Esophagus muscularis mucosa (tissue), 4 donors: ENCODE measurements at regions of chr4 and their contacts with region 1.

Region 1: GRCh38 chr4:139177868-139178611 is 1.0 kb upstream of the ELF2 start:
- DNase-seq: peak; percentile 98
- H3K4me3 ChIP-seq: peak overlapping the region; percentile 98 to 99 (median 99)
- H3K27ac ChIP-seq: peak overlapping the region; percentile 100
- H3K4me1 ChIP-seq: peaks cover 13 to 35% (median 31%) of the 10 kb centered on the region in 4 donors
- H3K27me3 ChIP-seq: no peaks in the 10 kb centered on the region
- CTCF ChIP-seq: no peak
- EP300 ChIP-seq: peak; percentile 65
- POLR2A ChIP-seq: peak; percentile 86

Region 2: GRCh38 chr4:139030614-139031235 is 147.3 kb before region 1 on chr4:
- intact Hi-C with region 1: loop called (anchors 5 kb)
- DNase-seq: no peak
- H3K4me3 ChIP-seq: no peak overlapping the region
- H3K27ac ChIP-seq: no peak overlapping the region
- H3K4me1 ChIP-seq: peaks cover 3 to 48% (median 13%) of the 10 kb centered on the region in 4 donors
- H3K27me3 ChIP-seq: no peaks in the 10 kb centered on the region
- CTCF ChIP-seq: peak; percentile 76 to 84 (median 79)
- EP300 ChIP-seq: no peak
- POLR2A ChIP-seq: no peak

Region 3: GRCh38 chr4:139083956-139084803 is 93.9 kb before region 1 on chr4:
- intact Hi-C with region 1: loop called (anchors 2 kb)
- DNase-seq: peak; percentile 95
- H3K4me3 ChIP-seq: peak overlapping the region; percentile 70 to 89 (median 78)
- H3K27ac ChIP-seq: peak overlapping the region; percentile 90 to 97 (median 96)
- H3K4me1 ChIP-seq: peaks cover 30 to 49% (median 43%) of the 10 kb centered on the region in 4 donors
- H3K27me3 ChIP-seq: no peaks in the 10 kb centered on the region
- CTCF ChIP-seq: peak; percentile 30 to 46 (median 34)
- EP300 ChIP-seq: no peak
- POLR2A ChIP-seq: no peak

Region 4: GRCh38 chr4:139099366-139099982 is 78.6 kb before region 1 on chr4:
- intact Hi-C with region 1: loop called (anchors 5 kb)
- DNase-seq: no peak
- H3K4me3 ChIP-seq: no peak overlapping the region
- H3K27ac ChIP-seq: no peak overlapping the region
- H3K4me1 ChIP-seq: peaks cover 0 to 16% (median 5%) of the 10 kb centered on the region in 4 donors
- H3K27me3 ChIP-seq: no peaks in the 10 kb centered on the region
- CTCF ChIP-seq: peak; percentile 77 to 89 (median 81)
- EP300 ChIP-seq: no peak
- POLR2A ChIP-seq: no peak

Region 5: DNA sequence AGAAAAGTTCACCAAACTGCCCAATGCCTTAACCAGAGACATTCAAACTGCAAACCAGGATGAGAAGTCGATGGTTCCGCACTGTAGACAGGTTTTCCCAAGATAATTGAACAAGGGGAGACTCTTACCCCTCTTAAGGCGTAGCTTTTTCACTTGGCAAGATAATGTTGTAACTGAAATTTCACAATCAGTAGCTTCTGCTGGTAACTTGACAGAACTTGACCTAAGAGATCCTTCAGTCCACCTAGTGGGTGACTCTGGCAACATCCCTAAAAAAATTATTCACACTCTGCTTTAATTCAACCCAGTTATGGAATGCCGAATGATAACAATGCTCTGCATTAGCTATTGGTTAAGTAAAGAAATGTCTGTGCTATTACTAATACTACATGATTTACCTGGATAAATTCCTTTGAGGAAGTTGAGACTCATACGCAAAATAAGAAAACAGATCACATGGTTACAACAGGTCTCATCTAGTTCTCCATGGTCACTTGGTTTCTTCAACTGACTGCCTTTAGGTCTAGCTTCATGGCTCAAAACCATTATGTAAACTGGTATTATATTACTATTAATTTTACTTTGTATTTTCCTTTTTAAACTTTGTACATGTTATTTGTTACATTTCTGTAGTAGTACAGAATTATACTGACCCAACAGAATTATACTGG is 10.1 kb before region 1 on chr4:
- intact Hi-C with region 1: no loop called
- DNase-seq: no peak
- H3K4me3 ChIP-seq: no peak overlapping the region
- H3K27ac ChIP-seq: peak overlapping the region in 2 of 4 donors; percentile 24 to 64
- H3K4me1 ChIP-seq: peaks cover 50 to 90% (median 76%) of the 10 kb centered on the region in 4 donors
- H3K27me3 ChIP-seq: no peaks in the 10 kb centered on the region
- CTCF ChIP-seq: peak; percentile 39 to 61 (median 41)
- EP300 ChIP-seq: no peak
- POLR2A ChIP-seq: no peak

Region 6: GRCh38 chr4:139295206-139295941 is 117.3 kb after region 1 on chr4:
- intact Hi-C with region 1: loop called (anchors 2 kb)
- DNase-seq: peak; percentile 100
- H3K4me3 ChIP-seq: peak overlapping the region; percentile 68 to 78 (median 70)
- H3K27ac ChIP-seq: peak overlapping the region; percentile 83 to 87 (median 84)
- H3K4me1 ChIP-seq: peaks cover 14 to 61% (median 43%) of the 10 kb centered on the region in 4 donors
- H3K27me3 ChIP-seq: no peaks in the 10 kb centered on the region
- CTCF ChIP-seq: peak; percentile 91 to 98 (median 94)
- EP300 ChIP-seq: no peak
- POLR2A ChIP-seq: no peak

Region 7: DNA sequence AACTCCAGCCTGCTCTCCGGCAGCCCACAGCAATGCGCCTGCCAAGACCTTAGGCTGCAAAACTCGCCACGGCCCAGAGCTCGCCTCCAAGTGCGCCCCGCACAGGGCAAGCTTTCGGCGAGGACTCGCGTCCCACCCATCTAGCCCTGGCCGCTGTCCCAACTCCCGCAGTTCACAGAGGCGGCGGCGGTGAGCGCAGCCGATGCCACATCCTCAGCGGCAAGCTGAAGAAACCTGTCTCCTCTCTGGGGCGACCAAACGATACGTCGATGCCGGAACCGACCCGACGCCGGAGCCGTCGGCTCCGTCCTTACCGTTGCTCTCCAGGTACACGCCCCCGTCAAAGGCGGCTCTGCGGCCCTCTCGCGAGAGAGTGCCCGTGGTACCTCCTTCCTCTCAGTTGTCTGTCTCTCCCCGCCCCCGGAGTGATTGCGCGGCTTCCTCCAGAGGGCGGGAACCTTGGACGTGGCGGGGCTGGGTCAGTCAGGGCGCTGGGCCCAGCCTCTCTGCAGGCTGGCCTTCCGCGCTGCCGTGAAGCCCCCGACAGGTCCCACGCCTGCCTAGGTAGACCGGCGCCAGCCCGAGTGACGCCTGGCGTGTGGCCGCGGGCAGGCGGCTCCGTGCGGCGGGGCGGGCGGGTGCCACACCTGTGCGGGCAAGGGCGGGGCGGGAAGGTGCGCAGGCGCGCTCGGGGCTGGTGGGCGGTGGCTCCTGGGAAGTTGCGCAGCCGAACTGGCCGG is 275.5 kb after region 1 on chr4:
- intact Hi-C with region 1: loop called (anchors 10 kb)
- DNase-seq: peak; percentile 99
- H3K4me3 ChIP-seq: peak overlapping the region; percentile 76 to 93 (median 81)
- H3K27ac ChIP-seq: peak overlapping the region; percentile 92 to 99 (median 96)
- H3K4me1 ChIP-seq: peaks cover 36 to 50% (median 49%) of the 10 kb centered on the region in 4 donors
- H3K27me3 ChIP-seq: no peaks in the 10 kb centered on the region
- CTCF ChIP-seq: peak in 1 of 3 experiments; percentile 7
- EP300 ChIP-seq: no peak
- POLR2A ChIP-seq: peak; percentile 63